ENCODE measurements at regions of chr6 and their contacts with region 1.

Region 1: GRCh38 chr6:46221222-46221793 is 50.5 kb upstream of the ENPP5 start:
- DNase-seq: no peak
- H3K4me3 ChIP-seq: no peak overlapping the region
- H3K27ac ChIP-seq: no peak overlapping the region
- H3K4me1 ChIP-seq: no peaks in the 10 kb centered on the region
- H3K27me3 ChIP-seq: no peaks in the 10 kb centered on the region
- CTCF ChIP-seq: peak; percentile 55 to 81 (median 70)
- POLR2A ChIP-seq: no peak

Region 2: GRCh38 chr6:46090115-46091079 is 130.9 kb before region 1 on chr6:
- intact Hi-C with region 1: loop called (anchors 5 kb)
- DNase-seq: peak; percentile 57
- H3K4me3 ChIP-seq: no peak overlapping the region
- H3K27ac ChIP-seq: no peak overlapping the region
- H3K4me1 ChIP-seq: no peaks in the 10 kb centered on the region
- H3K27me3 ChIP-seq: no peaks in the 10 kb centered on the region
- CTCF ChIP-seq: peak; percentile 64 to 87 (median 72)
- POLR2A ChIP-seq: no peak

Region 3: GRCh38 chr6:46263707-46264086 is 42.4 kb after region 1 on chr6:
- intact Hi-C with region 1: no loop called
- DNase-seq: no peak
- H3K4me3 ChIP-seq: no peak overlapping the region
- H3K27ac ChIP-seq: no peak overlapping the region
- H3K4me1 ChIP-seq: no peaks in the 10 kb centered on the region
- H3K27me3 ChIP-seq: no peaks in the 10 kb centered on the region
- CTCF ChIP-seq: no peak
- POLR2A ChIP-seq: no peak

Region 4: GRCh38 chr6:46279874-46280273 is 58.6 kb after region 1 on chr6:
- intact Hi-C with region 1: no loop called
- DNase-seq: no peak
- H3K4me3 ChIP-seq: no peak overlapping the region
- H3K27ac ChIP-seq: no peak overlapping the region
- H3K4me1 ChIP-seq: no peaks in the 10 kb centered on the region
- H3K27me3 ChIP-seq: no peaks in the 10 kb centered on the region
- CTCF ChIP-seq: no peak
- POLR2A ChIP-seq: no peak

Region 5: GRCh38 chr6:46410334-46410953 is 189.1 kb after region 1 on chr6:
- intact Hi-C with region 1: loop called (anchors 2 kb)
- DNase-seq: peak; percentile 9
- H3K4me3 ChIP-seq: no peak overlapping the region
- H3K27ac ChIP-seq: no peak overlapping the region
- H3K4me1 ChIP-seq: no peaks in the 10 kb centered on the region
- H3K27me3 ChIP-seq: no peaks in the 10 kb centered on the region
- CTCF ChIP-seq: peak; percentile 54 to 94 (median 68)
- POLR2A ChIP-seq: no peak

Region 6: DNA sequence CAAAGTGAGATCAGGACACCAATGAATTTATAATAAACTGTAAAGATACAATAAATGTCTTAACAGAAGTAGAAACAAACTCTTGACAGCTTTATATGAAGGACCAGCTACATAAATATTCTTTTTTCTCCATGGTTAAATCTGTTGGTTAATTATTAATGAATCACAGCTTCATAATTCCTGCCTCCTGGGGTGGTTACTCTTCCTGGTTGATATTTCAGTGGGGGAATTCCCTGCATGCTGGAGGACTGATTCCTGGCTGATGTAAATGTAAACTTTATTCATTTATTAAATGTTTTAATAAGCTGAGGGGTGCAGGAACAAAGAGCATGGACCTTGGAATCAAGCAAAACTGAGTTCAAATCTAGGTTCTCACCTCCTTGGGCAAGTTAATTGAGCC is 286.1 kb after region 1 on chr6:
- intact Hi-C with region 1: loop called (anchors 5 kb)
- DNase-seq: no peak
- H3K4me3 ChIP-seq: no peak overlapping the region
- H3K27ac ChIP-seq: no peak overlapping the region
- H3K4me1 ChIP-seq: no peaks in the 10 kb centered on the region
- H3K27me3 ChIP-seq: no peaks in the 10 kb centered on the region
- CTCF ChIP-seq: no peak
- POLR2A ChIP-seq: no peak

Region 7: DNA sequence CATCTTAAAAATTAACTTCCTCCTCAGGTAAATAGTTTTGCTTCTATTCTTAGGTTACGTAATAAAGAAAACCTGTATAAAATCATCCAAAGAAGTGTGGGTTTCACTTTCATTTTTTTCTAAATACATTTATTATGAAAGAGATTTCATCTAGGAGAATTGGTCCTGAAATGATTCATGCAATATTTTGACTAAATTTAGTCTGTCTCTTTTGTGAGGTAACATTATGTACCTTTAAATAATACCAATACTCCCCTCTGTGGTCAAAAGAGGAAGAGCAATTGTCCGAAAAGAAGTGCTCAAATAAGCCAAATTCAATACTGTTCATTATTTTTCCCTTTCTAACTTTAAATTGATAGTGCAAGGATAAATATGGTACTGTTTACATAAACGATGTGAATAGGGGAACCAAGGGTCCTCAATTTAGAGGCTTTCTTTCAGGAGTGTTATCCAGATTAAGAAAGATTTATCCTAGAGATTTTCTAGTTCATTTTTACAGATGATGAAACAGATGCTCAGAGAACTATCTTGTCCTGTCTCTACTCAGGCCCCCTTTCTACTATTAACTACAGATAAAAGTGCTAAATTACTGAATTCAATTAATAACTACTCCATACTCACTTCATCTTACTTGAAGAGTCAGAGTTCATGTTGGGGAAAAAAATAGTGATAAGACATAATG is 405.1 kb after region 1 on chr6:
- intact Hi-C with region 1: loop called (anchors 2 kb)
- DNase-seq: no peak
- H3K4me3 ChIP-seq: no peak overlapping the region
- H3K27ac ChIP-seq: no peak overlapping the region
- H3K4me1 ChIP-seq: no peaks in the 10 kb centered on the region
- H3K27me3 ChIP-seq: no peaks in the 10 kb centered on the region
- CTCF ChIP-seq: peak; percentile 31 to 75 (median 62)
- POLR2A ChIP-seq: no peak

Measured in prostate gland (tissue), 2 donors.